ENCODE measurements at regions of chr15 and their contacts with region 1.

Region 1: DNA sequence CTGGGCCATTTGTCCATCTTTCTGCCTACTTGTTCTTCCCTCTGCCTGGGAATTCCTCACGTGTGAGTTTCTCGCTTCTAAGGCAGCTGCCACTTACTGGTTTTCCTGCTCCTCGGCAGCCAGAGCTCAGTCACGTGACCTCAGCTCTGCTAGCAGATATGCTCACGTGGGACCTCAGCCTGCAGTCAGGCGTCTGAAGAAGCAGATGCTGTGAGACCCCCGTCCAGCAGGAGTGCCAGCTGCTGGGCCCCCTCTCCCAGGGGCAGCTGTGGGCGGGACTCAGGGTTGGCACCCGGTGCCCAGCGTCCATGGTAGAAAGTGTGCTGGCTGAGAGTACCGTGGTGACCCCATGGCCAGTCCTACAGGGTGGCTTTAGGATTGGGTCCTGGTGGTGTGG is 161.3 kb upstream of the TLE3 start:
- DNase-seq: peak; percentile 83
- H3K4me3 Mint-ChIP-seq: peak overlapping the region; percentile 51
- H3K27ac Mint-ChIP-seq: no peak overlapping the region
- H3K4me1 Mint-ChIP-seq: peaks cover 48% of the 10 kb centered on the region
- H3K27me3 Mint-ChIP-seq: peaks cover 35% of the 10 kb centered on the region

Region 2: DNA sequence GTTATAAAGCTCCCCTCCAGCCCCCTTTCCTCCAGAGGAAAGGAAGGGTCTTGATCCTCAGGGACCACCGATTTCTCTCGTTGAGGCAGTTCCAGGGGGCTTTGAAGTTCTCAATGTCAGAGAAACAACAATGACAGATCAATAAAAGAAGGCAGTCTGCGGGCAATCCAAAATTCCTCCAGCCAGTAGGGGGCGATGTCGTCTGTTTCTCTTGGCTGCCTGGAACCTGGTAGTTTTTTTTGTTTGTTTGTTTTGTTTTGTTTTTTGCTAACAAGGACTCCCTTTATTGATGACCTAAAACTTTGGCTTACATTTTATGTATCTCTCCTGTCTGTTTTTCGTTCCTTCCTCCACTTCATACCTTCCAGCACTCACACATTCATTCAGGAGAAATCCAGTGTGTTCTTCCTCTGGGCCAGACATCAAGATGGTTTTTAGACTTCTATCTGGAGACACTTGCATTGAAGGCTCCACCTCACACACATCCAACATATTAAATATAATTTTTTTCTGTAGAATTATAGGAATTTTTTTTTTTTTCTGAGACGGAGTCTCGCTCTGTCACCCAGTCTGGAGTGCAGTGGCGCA is 529.8 kb before region 1 on chr15:
- intact Hi-C with region 1: loop called (anchors 10 kb)
- DNase-seq: peak; percentile 92
- H3K4me3 Mint-ChIP-seq: no peak overlapping the region
- H3K27ac Mint-ChIP-seq: peak overlapping the region; percentile 12
- H3K4me1 Mint-ChIP-seq: peaks cover 58% of the 10 kb centered on the region
- H3K27me3 Mint-ChIP-seq: peaks cover 14% of the 10 kb centered on the region

Region 3: GRCh38 chr15:69760890-69761568 is 498.0 kb before region 1 on chr15:
- intact Hi-C with region 1: loop called (anchors 1 kb)
- DNase-seq: peak; percentile 95
- H3K4me3 Mint-ChIP-seq: peak overlapping the region; percentile 76
- H3K27ac Mint-ChIP-seq: peak overlapping the region; percentile 87
- H3K4me1 Mint-ChIP-seq: peaks cover 77% of the 10 kb centered on the region
- H3K27me3 Mint-ChIP-seq: peaks cover 2% of the 10 kb centered on the region

Region 4: GRCh38 chr15:70299931-70300869 is 41.2 kb after region 1 on chr15:
- intact Hi-C with region 1: loop called (anchors 2 kb)
- DNase-seq: peak; percentile 89
- H3K4me3 Mint-ChIP-seq: no peak overlapping the region
- H3K27ac Mint-ChIP-seq: peak overlapping the region; percentile 41
- H3K4me1 Mint-ChIP-seq: peaks cover 9% of the 10 kb centered on the region
- H3K27me3 Mint-ChIP-seq: peaks cover 22% of the 10 kb centered on the region

Region 5: GRCh38 chr15:70480196-70480856 is 221.3 kb after region 1 on chr15:
- intact Hi-C with region 1: loop called (anchors 1 kb)
- DNase-seq: peak; percentile 89
- H3K4me3 Mint-ChIP-seq: peak overlapping the region; percentile 58
- H3K27ac Mint-ChIP-seq: peak overlapping the region; percentile 88
- H3K4me1 Mint-ChIP-seq: peaks cover 60% of the 10 kb centered on the region
- H3K27me3 Mint-ChIP-seq: peaks cover 52% of the 10 kb centered on the region